Endothelial cell of umbilical vein (primary cell): ENCODE measurements at regions of chr5 and their contacts with region 1.

Region 1: DNA sequence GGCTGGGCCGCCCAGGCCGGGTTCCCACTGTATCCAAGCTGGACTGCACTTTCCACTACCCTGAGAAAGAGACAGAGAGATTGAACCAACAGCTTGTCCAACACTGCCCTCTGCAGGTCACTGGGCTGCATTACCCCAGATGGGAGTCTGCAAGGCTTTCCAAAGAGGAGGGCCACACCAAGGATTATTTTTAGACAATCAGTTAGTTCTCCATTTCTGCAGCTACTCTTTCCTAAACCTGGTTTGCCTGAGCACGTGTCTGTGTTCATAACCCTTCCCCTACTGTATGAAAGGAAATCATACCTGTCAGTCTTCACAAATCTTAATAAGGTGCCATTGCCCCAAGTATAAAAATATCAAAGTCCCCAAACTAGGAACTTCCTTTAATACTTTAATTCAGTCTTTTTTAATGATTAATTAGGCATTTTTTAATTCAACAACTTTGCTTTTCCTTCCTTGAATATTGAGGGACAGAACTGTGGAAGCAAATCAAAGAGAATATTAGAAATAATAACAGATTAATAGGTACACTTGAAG is 13.4 kb upstream of the FGF1 start:
- DNase-seq: peak; percentile 83
- H3K4me3 ChIP-seq: no peak overlapping the region
- H3K27ac ChIP-seq: no peak overlapping the region
- H3K4me1 ChIP-seq: no peaks in the 10 kb centered on the region
- H3K27me3 ChIP-seq: peaks cover 0 to 6% of the 10 kb centered on the region in 2 experiments
- CTCF ChIP-seq: peak; percentile 91 to 93
- POLR2A ChIP-seq: no peak

Region 2: DNA sequence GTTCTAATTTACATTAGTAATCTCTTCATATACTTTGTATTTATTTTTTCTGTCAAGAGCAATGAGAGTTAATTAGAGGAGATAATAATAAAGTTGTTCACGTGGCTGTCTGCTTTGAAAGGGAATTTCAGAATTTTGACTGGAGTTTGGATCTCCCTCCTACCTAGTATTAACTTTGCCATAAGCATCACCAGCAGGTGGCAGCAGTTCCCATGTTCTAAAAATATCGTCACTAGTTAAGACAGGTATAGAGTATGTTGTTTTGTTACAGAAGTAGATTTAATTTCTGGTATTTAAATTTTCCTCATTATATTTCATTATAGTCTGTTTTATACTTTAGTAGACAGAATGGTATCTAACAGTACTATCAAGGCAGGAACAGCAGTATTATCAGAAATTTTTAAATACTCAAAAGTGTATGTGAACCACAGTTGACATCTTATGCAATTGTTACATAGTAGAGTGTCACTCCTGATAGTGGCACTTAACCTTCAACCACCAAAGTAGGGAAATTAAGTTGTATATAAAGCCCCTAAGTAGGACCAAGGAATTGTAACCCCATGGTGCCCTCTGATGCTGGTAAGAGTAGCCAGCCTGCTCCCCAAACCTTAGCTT is 706.8 kb before region 1 on chr5:
- CTCF ChIA-PET with region 1: interaction called, 3 read pairs
- POLR2A ChIA-PET with region 1: no interaction called
- dilution Hi-C with region 1: no loop called
- intact Hi-C with region 1: loop called (anchors 5 kb)
- DNase-seq: peak; percentile 72
- H3K4me3 ChIP-seq: no peak overlapping the region
- H3K27ac ChIP-seq: no peak overlapping the region
- H3K4me1 ChIP-seq: no peaks in the 10 kb centered on the region
- H3K27me3 ChIP-seq: no peaks in the 10 kb centered on the region
- CTCF ChIP-seq: peak; percentile 45 to 58
- POLR2A ChIP-seq: no peak

Region 3: DNA sequence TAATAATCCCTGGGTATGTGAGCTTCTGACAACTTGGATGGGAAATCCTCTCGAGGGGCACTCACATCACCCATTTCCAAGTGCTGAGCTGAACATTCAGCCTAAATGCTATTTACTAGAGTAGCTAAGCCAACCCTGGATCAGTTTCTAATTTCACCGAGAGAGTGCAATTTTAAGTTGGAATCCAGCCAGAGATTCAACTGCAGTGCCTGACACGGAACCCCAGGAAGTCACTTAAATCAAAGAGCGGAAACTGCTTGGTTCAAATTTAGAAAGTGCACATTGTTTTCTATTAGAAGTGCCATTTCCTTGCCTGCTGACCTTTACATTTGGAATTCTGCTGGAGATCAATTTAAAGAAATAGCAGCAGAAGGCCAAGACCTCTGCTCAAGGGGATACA is 383.2 kb before region 1 on chr5:
- CTCF ChIA-PET with region 1: no interaction called
- POLR2A ChIA-PET with region 1: no interaction called
- dilution Hi-C with region 1: no loop called
- intact Hi-C with region 1: loop called (anchors 10 kb)
- DNase-seq: peak; percentile 82
- H3K4me3 ChIP-seq: no peak overlapping the region
- H3K27ac ChIP-seq: peak overlapping the region; percentile 57
- H3K4me1 ChIP-seq: peaks cover 68% of the 10 kb centered on the region
- H3K27me3 ChIP-seq: no peaks in the 10 kb centered on the region
- CTCF ChIP-seq: no peak
- POLR2A ChIP-seq: no peak

Region 4: DNA sequence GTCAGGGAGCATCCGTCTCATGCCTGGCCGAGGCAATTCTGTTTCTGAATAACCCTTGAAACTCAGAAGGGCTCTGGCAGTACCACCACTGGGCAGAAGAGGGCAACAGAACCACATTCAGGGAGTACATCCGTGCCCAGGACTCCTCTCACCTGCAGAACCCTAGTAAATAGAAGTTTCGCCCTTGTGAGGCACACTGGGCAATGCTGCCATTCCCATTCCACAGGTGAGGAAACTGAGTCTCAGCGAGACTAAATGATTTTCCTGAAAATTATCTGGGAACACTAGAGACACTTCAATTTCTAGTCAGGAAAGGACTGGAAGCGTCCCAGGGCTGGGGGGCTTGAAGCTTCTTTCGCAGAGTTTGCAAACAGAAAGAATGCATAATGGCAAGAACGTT is 88.1 kb before region 1 on chr5:
- CTCF ChIA-PET with region 1: interaction called, 96 read pairs
- POLR2A ChIA-PET with region 1: no interaction called
- dilution Hi-C with region 1: no loop called
- intact Hi-C with region 1: loop called (anchors 1 kb)
- DNase-seq: peak; percentile 74
- H3K4me3 ChIP-seq: no peak overlapping the region
- H3K27ac ChIP-seq: no peak overlapping the region
- H3K4me1 ChIP-seq: no peaks in the 10 kb centered on the region
- H3K27me3 ChIP-seq: peaks cover 2 to 27% of the 10 kb centered on the region in 2 experiments
- CTCF ChIP-seq: peak; percentile 87 to 90
- POLR2A ChIP-seq: no peak

Region 5: DNA sequence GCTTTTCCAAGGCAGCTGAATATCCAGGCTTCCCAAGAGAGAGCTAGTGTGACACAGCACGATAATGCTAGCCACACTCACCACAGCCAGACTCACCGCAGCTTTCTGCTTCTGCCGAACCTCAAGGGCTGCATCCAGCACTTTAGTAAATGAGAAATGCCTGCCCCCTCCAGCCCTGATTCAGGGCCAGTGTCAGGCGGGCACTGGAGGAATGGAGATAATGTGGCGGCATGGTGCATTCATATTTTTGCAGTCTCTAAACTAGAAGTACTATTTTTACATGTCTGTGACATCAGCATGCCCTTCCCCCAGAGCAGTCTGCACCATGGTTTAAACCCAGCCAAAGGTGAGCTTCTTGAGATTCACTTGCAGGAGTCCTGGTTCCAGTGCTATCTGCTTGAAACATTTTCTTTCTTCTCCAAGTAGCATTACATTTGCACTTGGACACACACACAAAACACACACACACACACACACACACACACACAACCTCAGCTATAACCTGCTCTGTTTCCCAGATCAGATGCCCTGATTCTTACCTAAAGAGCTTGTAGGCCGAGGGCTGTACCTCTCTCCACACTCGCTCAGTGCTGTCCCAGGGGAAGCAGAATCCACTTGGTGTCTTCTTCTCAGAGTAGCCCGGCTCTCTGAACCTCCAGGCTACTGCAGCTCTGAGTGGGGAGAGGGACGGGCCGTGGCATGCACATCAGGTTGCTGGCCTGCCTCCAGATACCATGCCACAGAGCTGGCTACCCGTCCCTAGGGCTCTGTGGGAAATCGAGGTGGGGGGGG is 13.6 kb before region 1 on chr5 and contains the start of gene FGF1:
- CTCF ChIA-PET with region 1: interaction called, 19 read pairs
- POLR2A ChIA-PET with region 1: no interaction called
- dilution Hi-C with region 1: no loop called
- intact Hi-C with region 1: no loop called
- DNase-seq: no peak
- H3K4me3 ChIP-seq: no peak within 1 kb of the TSS
- H3K27ac ChIP-seq: no peak within 1 kb of the TSS
- H3K4me1 ChIP-seq: peaks cover 7% of the 10 kb centered on the region
- H3K27me3 ChIP-seq: peaks cover 17 to 23% of the 10 kb centered on the region in 2 experiments
- CTCF ChIP-seq: no peak
- POLR2A ChIP-seq: no peak
- total RNA-seq, gene FGF1: not detected in 2 replicates

Region 6: GRCh38 chr5:142735331-142736246 is 36.3 kb after region 1 on chr5:
- CTCF ChIA-PET with region 1: no interaction called
- POLR2A ChIA-PET with region 1: no interaction called
- dilution Hi-C with region 1: no loop called
- intact Hi-C with region 1: no loop called
- DNase-seq: no peak
- H3K4me3 ChIP-seq: no peak overlapping the region
- H3K27ac ChIP-seq: no peak overlapping the region
- H3K4me1 ChIP-seq: peaks cover 4% of the 10 kb centered on the region
- H3K27me3 ChIP-seq: peaks cover 0 to 9% of the 10 kb centered on the region in 2 experiments
- CTCF ChIP-seq: no peak
- POLR2A ChIP-seq: no peak

Region 7: GRCh38 chr5:143355720-143356119 is 656.5 kb after region 1 on chr5:
- CTCF ChIA-PET with region 1: no interaction called
- POLR2A ChIA-PET with region 1: no interaction called
- dilution Hi-C with region 1: no loop called
- intact Hi-C with region 1: no loop called
- DNase-seq: peak; percentile 94
- H3K4me3 ChIP-seq: no peak overlapping the region
- H3K27ac ChIP-seq: peak overlapping the region; percentile 61
- H3K4me1 ChIP-seq: peaks cover 17% of the 10 kb centered on the region
- H3K27me3 ChIP-seq: no peaks in the 10 kb centered on the region
- CTCF ChIP-seq: no peak
- POLR2A ChIP-seq: no peak